K562 (cell line): ENCODE measurements at regions of chr12 and their contacts with region 1.

Region 1: DNA sequence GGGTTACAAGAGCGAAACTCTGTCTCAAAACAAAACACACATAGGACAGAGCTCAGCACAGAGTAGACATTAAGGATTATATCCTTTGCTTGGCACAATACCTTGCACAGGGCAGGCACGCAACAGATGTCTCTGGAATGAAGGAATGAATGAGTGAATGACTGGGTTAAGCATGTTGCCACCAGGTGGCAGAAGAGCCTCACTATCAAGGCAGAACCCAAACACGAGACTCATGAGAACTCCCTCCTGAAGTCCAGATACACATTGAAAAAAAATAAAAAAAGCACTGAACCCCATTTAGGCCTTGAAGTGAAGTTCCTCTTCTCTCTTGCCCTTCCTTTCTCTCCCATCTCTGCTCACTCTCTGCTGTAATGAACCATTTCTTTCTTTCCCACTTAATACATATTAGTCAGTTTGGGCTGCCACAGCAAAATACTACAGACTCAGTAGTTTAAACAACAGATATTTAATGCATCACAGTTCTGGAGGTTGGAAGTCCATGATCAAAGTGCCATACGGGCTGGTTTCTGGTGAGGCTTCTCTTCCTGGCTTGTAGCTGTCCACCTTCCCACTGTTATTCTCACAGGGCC is 26.6 kb upstream of the LTA4H start:
- DNase-seq: peak; percentile 57 to 78 (median 60)
- ATAC-seq: peak; percentile 96
- H3K4me3 ChIP-seq: no peak overlapping the region
- H3K27ac ChIP-seq: no peak overlapping the region
- H3K4me1 ChIP-seq: no peaks in the 10 kb centered on the region
- H3K27me3 ChIP-seq: peaks cover 0 to 11% of the 10 kb centered on the region in 2 experiments; a peak in 3 of 5 replicates
- CTCF ChIP-seq: peak; percentile 72 to 84 (median 76)
- EP300 ChIP-seq: no peak
- POLR2A ChIP-seq: no peak
- RAD21 ChIP-seq: peak; percentile 91 to 96

Region 2: DNA sequence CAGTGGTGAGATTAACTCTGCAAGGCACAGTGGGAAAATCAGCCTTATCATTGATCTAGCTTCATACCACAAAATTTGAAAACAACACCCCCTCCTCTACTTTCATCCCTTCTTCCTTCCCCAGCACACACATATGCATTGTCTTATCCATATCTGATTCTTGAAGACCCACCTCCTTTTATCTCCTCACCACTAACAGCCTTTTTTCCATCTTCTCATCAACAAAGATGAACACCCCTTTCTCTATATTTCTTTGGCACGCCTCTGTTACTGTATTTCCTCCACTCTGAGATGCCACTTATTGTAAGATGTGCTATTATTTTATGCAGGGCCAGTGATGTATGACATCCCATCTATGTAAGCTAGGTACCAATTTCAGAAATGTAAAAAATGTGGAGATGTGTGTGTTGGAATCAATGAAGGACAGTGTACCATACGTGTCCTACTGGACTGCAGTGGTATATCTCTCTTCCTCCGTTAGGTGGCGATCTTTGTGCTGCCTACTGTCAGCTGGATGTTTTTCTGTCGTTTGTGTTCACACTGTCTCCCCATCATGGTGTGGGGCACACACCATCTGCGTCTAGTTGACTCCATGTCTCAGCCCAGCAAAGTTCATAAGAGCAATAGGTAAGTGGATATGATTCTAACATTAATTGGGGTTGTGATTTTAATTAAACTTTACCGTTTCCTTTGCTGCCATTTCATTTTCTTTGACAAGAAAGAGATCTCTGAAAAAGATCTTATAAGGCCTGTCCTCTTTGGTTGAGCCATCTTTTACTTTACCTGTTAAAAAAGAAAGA is 143.6 kb before region 1 on chr12:
- CTCF ChIA-PET with region 1: no interaction called
- POLR2A ChIA-PET with region 1: no interaction called
- in situ Hi-C with region 1: no loop called
- intact Hi-C with region 1: loop called (anchors 5 kb)
- DNase-seq: peak; percentile 17 to 53 (median 25)
- ATAC-seq: peak; percentile 92
- H3K4me3 ChIP-seq: no peak overlapping the region
- H3K27ac ChIP-seq: no peak overlapping the region
- H3K4me1 ChIP-seq: no peaks in the 10 kb centered on the region
- H3K27me3 ChIP-seq: no peaks in the 10 kb centered on the region; a peak in 1 of 5 replicates
- CTCF ChIP-seq: peak; percentile 64 to 75 (median 75)
- EP300 ChIP-seq: no peak
- POLR2A ChIP-seq: no peak
- RAD21 ChIP-seq: peak; percentile 42 to 76

Region 3: DNA sequence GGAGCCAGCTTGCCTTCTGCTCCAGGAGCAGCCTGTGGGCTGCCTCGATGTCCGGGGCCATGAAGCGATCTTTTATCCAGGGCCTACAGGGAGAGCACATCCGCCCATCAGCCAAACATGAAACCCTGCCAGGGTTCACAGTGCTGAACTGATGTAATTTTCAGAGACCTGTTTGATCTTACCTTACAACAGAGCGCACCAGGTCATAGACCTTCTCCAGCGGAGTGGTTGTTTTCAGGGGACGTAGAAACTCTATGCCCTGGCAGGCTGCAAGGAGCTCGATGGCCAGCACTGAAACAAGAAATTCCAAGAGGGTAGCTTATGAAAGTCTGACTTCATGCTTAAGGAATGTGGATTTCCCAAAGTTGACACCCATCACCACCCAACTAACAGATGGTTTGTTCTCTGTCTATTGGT is 85.5 kb before region 1 on chr12:
- CTCF ChIA-PET with region 1: no interaction called
- POLR2A ChIA-PET with region 1: no interaction called
- in situ Hi-C with region 1: no loop called
- intact Hi-C with region 1: no loop called
- DNase-seq: no peak
- ATAC-seq: no peak
- H3K4me3 ChIP-seq: no peak overlapping the region
- H3K27ac ChIP-seq: no peak overlapping the region
- H3K4me1 ChIP-seq: peaks cover 0 to 5% of the 10 kb centered on the region in 2 experiments; a peak in 1 of 5 replicates
- H3K27me3 ChIP-seq: peaks cover 20 to 21% of the 10 kb centered on the region in 2 experiments
- CTCF ChIP-seq: no peak
- EP300 ChIP-seq: no peak
- POLR2A ChIP-seq: no peak
- RAD21 ChIP-seq: no peak

Region 4: DNA sequence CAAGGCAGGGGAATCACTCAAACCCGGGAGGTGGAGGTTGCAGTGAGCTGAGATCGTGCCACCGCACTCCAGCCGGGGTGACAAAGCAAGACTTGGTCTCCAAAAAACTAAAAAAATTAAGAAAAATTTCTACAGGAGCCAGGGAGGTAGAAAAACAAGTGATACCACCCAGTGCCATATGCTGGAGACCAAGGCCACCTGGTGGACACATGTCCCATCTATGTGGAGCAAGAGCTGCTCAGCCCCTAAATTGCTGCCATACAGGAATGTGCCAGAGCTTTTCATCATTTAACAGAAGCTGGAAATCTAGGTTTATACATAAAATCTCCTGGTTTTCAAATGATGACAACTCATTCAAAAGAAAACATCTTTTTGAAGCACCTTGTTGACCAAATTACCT is 70.9 kb after region 1 on chr12:
- CTCF ChIA-PET with region 1: interaction called, 3 read pairs
- POLR2A ChIA-PET with region 1: no interaction called
- in situ Hi-C with region 1: no loop called
- intact Hi-C with region 1: loop called (anchors 2 kb)
- DNase-seq: peak in 2 of 4 experiments; percentile 21 to 22
- ATAC-seq: peak; percentile 75
- H3K4me3 ChIP-seq: no peak overlapping the region
- H3K27ac ChIP-seq: no peak overlapping the region
- H3K4me1 ChIP-seq: 0 out of 5 replicates have a peak, but pooled peaks cover 0 to 6% of the 10 kb centered on the region in 2 experiments
- H3K27me3 ChIP-seq: peaks cover 19 to 31% of the 10 kb centered on the region in 2 experiments; a peak in 4 of 5 replicates
- CTCF ChIP-seq: peak; percentile 15 to 54 (median 22); a peak in 2 of 6 replicates
- EP300 ChIP-seq: no peak
- POLR2A ChIP-seq: no peak
- RAD21 ChIP-seq: peak; percentile 53 to 71

Region 5: DNA sequence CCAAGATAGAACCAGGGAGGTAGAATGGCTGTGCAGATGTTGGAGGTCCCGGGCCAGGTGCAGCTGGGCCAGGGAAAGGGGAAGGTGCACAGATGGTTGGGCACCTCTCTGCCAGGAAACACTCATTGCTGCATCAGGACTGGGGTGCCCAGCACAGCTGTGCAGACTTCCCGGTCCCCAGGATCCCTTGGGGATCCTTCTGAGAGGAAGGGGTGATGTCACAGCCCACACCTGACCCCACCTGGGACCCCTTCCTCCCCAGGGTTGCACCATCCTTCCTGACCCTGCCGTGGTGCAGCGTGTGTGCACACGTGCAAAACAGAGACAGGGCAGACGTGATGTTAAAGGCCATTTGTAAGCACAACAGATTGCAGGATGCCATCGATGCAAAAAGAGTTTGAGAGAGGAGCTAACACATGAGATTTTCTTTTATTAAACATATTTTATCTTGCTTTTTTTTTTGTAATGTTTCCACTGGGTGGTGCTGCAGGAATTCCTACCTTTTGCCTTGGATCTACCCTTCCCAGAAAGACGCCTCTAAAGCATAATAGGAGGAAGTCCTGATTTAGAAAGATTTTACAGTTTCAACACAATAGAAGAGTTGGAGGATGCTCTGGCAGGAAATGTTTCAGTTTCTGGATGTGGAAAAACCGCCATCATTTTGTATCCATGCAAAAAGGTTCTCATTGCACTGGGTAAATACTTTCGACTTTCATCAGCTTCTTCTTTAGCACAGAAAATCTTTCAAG is 147.0 kb after region 1 on chr12:
- CTCF ChIA-PET with region 1: interaction called, 33 read pairs
- POLR2A ChIA-PET with region 1: no interaction called
- in situ Hi-C with region 1: loop called (anchors 10 kb)
- intact Hi-C with region 1: no loop called
- DNase-seq: no peak
- ATAC-seq: no peak
- H3K4me3 ChIP-seq: no peak overlapping the region
- H3K27ac ChIP-seq: no peak overlapping the region
- H3K4me1 ChIP-seq: no peaks in the 10 kb centered on the region
- H3K27me3 ChIP-seq: peaks cover 11 to 24% of the 10 kb centered on the region in 2 experiments; a peak in 3 of 5 replicates
- CTCF ChIP-seq: peak in 2 of 3 experiments; percentile 14 to 32; a peak in 2 of 6 replicates
- EP300 ChIP-seq: no peak
- POLR2A ChIP-seq: no peak
- RAD21 ChIP-seq: 0 out of 4 replicates have a peak, but pooled peaks of 1 of the 2 experiments have one; percentile 9

Region 6: GRCh38 chr12:96219698-96220206 is 157.8 kb after region 1 on chr12:
- CTCF ChIA-PET with region 1: interaction called, 33 read pairs
- POLR2A ChIA-PET with region 1: no interaction called
- in situ Hi-C with region 1: loop called (anchors 10 kb)
- intact Hi-C with region 1: loop called (anchors 1 kb)
- DNase-seq: no peak
- ATAC-seq: no peak; the same call in 1 of the 3 replicates
- H3K4me3 ChIP-seq: no peak overlapping the region
- H3K27ac ChIP-seq: no peak overlapping the region
- H3K4me1 ChIP-seq: no peaks in the 10 kb centered on the region
- H3K27me3 ChIP-seq: 0 out of 5 replicates have a peak, but pooled peaks cover 0 to 3% of the 10 kb centered on the region in 2 experiments
- CTCF ChIP-seq: no peak
- EP300 ChIP-seq: no peak
- POLR2A ChIP-seq: no peak
- RAD21 ChIP-seq: no peak